ENCODE measurements at regions of chr18 and their contacts with region 1.

Region 1: GRCh38 chr18:11937874-11938478 is 29.9 kb upstream of the MPPE1 start:
- DNase-seq: peak; percentile 68
- H3K4me3 ChIP-seq: no peak overlapping the region
- H3K27ac ChIP-seq: no peak overlapping the region
- H3K4me1 ChIP-seq: no peaks in the 10 kb centered on the region
- H3K27me3 ChIP-seq: no peaks in the 10 kb centered on the region
- CTCF ChIP-seq: peak; percentile 88

Region 2: DNA sequence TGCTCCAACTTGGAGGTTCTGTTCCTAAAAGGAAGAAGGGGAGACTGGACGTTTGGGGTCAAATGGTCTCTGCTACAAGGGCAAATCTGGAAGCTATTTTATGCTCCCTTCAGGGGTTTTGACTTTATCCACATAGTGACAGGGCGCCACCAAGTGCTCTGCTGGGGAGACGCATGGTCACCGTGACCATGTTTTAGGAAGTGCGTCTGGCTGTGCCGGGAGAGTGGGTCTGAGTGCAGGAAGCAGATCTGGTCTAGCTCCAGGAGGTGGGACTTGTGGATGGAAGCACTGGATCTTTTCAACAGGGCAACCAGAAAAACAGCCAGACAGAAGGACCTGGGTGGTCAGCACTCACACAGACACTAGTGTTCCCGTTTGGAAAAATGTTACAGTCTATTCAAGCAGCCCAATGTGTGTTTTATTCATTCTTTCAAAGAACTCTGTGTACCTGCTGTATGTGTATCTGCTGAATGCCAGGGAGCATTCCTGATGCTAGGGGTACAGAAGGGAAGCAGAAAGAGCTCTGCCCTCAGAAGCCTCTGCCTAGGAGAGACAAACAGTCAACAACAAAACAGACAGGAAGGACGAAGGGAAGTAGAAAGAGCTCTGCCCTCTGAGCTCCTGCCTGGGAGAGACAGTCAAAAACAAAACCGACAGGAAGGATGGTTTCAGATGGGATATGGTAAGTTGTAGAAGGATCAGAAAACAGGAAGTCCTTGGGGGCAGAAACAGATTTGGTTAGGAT is 57.6 kb after region 1 on chr18:
- intact Hi-C with region 1: loop called (anchors 5 kb)
- DNase-seq: peak; percentile 75
- H3K4me3 ChIP-seq: no peak overlapping the region
- H3K27ac ChIP-seq: peak overlapping the region; percentile 80
- H3K4me1 ChIP-seq: peaks cover 62% of the 10 kb centered on the region
- H3K27me3 ChIP-seq: no peaks in the 10 kb centered on the region
- CTCF ChIP-seq: peak; percentile 87

Region 3: DNA sequence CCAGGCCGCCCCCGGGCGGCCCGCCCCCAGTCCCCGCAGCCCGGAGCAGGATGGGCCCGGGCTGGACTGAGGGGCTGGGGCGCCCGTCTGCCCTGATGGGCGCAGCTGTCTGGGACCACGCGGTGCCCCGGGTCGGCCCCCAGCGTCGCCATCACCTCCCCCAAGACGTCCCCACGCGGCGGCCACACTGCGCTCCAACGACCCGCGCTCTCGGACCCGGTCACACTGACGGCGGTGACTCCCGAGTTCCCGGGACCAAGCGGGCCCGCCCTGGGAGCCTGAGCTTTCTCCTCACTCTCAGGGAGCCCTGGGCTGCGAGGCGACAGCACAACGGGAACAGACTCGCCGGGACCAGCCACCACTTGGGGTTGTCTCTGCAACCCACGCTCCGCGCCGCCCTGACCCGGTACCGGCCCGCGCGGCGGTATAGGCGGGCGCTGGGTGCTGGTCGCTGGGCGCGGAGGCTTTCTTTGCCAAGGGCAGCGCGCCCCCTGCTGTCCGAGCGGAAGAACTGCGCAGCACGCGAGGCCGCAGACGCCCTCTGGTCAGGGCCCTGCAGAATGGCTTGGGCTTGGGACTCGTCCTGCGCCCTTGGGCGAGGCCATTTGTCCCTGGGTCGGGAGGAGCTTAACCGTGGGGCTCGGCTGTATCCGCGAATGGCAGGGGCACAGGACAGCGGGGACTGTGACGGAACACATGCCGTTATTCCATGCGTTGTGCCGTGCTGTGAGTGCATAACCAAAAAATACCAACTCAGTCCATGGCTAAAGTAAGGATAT is 100.9 kb after region 1 on chr18:
- intact Hi-C with region 1: loop called (anchors 5 kb)
- DNase-seq: peak; percentile 86
- H3K4me3 ChIP-seq: peak overlapping the region; percentile 74
- H3K27ac ChIP-seq: peak overlapping the region; percentile 59
- H3K4me1 ChIP-seq: peaks cover 13% of the 10 kb centered on the region
- H3K27me3 ChIP-seq: peaks cover 3% of the 10 kb centered on the region
- CTCF ChIP-seq: peak; percentile 99

Measured in left ventricle myocardium inferior (tissue), 1 donor.